CD4-positive, alpha-beta T cell (primary cell): ENCODE measurements at regions of chr15 and their contacts with region 1.

Region 1: DNA sequence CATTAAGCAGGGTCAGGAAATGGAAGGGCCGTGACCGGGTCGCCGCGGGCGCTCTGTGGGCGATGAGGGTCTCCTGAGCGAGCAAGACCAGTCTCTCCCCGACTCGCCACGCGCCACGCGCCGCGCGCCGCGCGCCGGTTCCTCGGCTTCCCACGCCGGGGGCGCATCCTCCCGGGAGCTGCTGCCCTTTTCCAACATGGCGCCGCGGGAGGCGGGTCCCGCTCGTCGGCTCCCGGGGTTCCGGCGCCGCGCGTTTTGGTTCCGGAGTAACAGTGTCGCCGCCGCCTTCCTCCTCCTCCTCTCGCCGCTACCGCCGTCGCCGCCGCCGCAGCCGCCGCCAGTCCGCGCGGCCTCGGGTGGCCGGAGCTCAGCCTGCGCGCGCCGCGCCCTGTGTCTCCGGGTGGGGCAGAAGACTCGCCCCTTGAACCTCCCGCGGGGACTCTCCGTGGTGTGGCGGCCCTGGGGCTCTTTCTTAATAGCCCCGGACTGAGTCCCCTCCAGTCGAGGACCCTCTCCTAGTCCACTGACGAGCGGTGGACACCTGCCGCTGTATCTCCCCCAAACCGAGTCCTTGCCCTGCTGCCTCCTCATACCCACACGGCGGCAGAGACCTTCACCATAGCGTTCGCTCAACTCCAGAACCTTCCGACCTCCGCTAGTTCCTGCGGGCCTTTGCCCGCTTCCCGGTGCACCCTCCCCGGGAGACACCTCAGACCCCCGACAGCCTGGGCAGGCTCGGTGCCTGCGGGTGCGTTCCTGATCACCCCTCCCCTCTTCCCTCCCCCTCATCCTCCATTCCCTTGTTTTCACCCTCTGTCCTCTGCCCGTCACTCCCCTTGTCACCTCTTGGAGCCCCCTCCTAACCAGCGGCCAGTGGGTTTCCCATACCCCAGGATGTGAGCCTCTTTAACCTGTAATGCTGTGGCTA is at the start of gene MAP2K5:
- DNase-seq: peak; percentile 73 to 91 (median 81)
- ATAC-seq: peak; percentile 76
- H3K4me3 ChIP-seq: peak within 1 kb of the TSS; percentile 77
- H3K4me3 Mint-ChIP-seq: peak within 1 kb of the TSS; percentile 93
- H3K27ac ChIP-seq: peak within 1 kb of the TSS; percentile 74 to 78
- H3K27ac Mint-ChIP-seq: peak within 1 kb of the TSS; percentile 99
- H3K4me1 ChIP-seq: peaks cover 14% of the 10 kb centered on the region
- H3K4me1 Mint-ChIP-seq: peaks cover 58% of the 10 kb centered on the region
- H3K27me3 ChIP-seq: no peaks in the 10 kb centered on the region
- H3K27me3 Mint-ChIP-seq: no peaks in the 10 kb centered on the region
- CTCF ChIP-seq: no peak
- total RNA-seq, gene MAP2K5: 22.2 to 27.9 TPM

Region 2: DNA sequence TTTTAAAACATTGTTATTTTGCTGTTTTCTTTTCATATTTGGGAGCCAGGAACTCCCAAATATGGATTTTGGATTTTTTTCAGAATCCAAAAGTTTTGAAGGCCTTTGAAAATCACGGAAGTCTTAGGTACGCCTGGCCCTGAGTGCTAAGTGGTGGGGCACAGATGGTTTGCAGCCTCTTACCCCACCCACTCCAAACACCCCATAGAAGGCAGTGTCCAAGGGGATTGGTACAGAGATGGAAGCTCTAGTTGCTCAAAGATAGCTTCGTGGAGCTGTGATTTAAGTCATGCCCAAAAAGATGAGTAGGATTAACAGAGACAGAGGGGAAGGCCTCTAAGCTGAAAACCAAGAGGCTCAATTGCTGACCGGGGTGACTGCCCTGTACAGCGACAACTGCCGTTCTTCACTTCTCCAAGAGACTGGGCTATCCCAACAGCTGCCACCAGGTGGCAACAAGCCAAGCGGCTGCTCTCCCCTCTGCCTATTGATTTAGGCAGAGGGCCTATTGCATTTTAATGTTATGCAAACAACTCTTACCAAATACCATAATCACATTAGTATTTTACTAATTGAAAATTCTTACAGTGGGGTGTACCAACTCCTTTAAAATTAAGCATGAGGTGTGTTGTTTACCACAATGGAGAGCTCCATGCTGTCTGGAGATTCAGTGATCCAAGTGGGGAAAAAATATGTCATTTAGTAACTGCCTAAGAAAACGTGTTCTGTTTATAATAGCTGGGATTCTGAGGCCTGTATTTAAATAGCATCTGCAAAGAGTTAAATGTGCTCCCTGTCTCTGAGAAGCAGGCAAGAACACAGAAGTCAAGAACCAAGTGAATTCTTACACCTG is 85.8 kb before region 1 on chr15:
- CTCF ChIA-PET with region 1: no interaction called
- POLR2A ChIA-PET with region 1: interaction called, 3 read pairs
- intact Hi-C with region 1: loop called in 1 of 2 experiments (anchors 2 kb)
- DNase-seq: peak; percentile 70 to 90 (median 81)
- ATAC-seq: peak; percentile 91
- H3K4me3 ChIP-seq: no peak overlapping the region
- H3K4me3 Mint-ChIP-seq: no peak overlapping the region
- H3K27ac ChIP-seq: no peak overlapping the region
- H3K27ac Mint-ChIP-seq: no peak overlapping the region
- H3K4me1 ChIP-seq: peaks cover 4% of the 10 kb centered on the region
- H3K4me1 Mint-ChIP-seq: no peaks in the 10 kb centered on the region
- H3K27me3 ChIP-seq: peaks cover 0 to 6% of the 10 kb centered on the region in 2 experiments
- H3K27me3 Mint-ChIP-seq: peaks cover 18% of the 10 kb centered on the region
- CTCF ChIP-seq: peak; percentile 82